GM12878 (cell line): ENCODE measurements at regions of chr12 and their contacts with region 1.

Region 1: GRCh38 chr12:3299929-3300832 is 190.8 kb upstream of the PRMT8 start:
- DNase-seq: peak; percentile 24
- ATAC-seq: peak; percentile 93
- H3K4me3 ChIP-seq: no peak overlapping the region
- H3K27ac ChIP-seq: no peak overlapping the region
- H3K4me1 ChIP-seq: no peaks in the 10 kb centered on the region
- H3K27me3 ChIP-seq: peaks cover 0 to 1% of the 10 kb centered on the region in 2 experiments; a peak in 2 of 4 replicates
- CTCF ChIP-seq: peak; percentile 88 to 97 (median 96)
- EP300 ChIP-seq: no peak
- POLR2A ChIP-seq: no peak
- RAD21 ChIP-seq: peak; percentile 86

Region 2: DNA sequence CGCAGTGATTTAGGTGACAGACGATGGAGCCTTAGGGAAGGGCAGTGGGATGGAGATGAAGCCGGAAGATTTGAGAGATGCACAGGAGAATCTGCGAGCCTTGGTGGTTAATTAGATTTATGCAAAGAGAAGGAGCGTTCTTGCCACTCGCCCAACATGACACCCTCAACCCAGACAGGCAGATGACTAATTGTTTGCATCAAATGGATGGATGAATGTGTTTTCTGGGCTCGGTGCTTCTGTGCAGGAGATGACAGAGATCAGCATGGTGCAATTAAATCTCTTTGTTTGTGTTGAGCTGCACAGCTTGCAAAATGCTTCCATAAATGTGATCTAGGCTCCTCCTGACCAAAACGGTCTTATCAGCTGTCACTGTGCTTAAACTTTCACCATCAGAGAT is 11.5 kb before region 1 on chr12:
- CTCF ChIA-PET with region 1: interaction called, 24 read pairs
- POLR2A ChIA-PET with region 1: no interaction called
- RAD21 ChIA-PET with region 1: interaction called, 3 read pairs
- SMC1A ChIA-PET with region 1: interaction called, 12 read pairs
- in situ Hi-C with region 1: no loop called
- intact Hi-C with region 1: no loop called
- DNase-seq: no peak
- ATAC-seq: no peak
- H3K4me3 ChIP-seq: no peak overlapping the region
- H3K27ac ChIP-seq: no peak overlapping the region
- H3K4me1 ChIP-seq: no peaks in the 10 kb centered on the region
- H3K27me3 ChIP-seq: peaks cover 2 to 17% of the 10 kb centered on the region in 2 experiments; a peak in 3 of 4 replicates
- CTCF ChIP-seq: no peak
- EP300 ChIP-seq: no peak
- POLR2A ChIP-seq: no peak
- RAD21 ChIP-seq: no peak

Region 3: GRCh38 chr12:3777206-3777809 is 477.1 kb after region 1 on chr12:
- CTCF ChIA-PET with region 1: interaction called, 25 read pairs
- POLR2A ChIA-PET with region 1: no interaction called
- RAD21 ChIA-PET with region 1: interaction called, 17 read pairs
- SMC1A ChIA-PET with region 1: interaction called, 17 read pairs
- in situ Hi-C with region 1: loop called (anchors 10 kb)
- intact Hi-C with region 1: loop called (anchors 1 kb)
- DNase-seq: no peak
- ATAC-seq: peak; percentile 69; the same call in 2 of the 3 replicates
- H3K4me3 ChIP-seq: no peak overlapping the region
- H3K27ac ChIP-seq: no peak overlapping the region
- H3K4me1 ChIP-seq: no peaks in the 10 kb centered on the region
- H3K27me3 ChIP-seq: no peaks in the 10 kb centered on the region
- CTCF ChIP-seq: peak; percentile 56 to 72 (median 65); a peak in 5 of 6 replicates
- EP300 ChIP-seq: no peak
- POLR2A ChIP-seq: no peak
- RAD21 ChIP-seq: peak; percentile 79

Region 4: DNA sequence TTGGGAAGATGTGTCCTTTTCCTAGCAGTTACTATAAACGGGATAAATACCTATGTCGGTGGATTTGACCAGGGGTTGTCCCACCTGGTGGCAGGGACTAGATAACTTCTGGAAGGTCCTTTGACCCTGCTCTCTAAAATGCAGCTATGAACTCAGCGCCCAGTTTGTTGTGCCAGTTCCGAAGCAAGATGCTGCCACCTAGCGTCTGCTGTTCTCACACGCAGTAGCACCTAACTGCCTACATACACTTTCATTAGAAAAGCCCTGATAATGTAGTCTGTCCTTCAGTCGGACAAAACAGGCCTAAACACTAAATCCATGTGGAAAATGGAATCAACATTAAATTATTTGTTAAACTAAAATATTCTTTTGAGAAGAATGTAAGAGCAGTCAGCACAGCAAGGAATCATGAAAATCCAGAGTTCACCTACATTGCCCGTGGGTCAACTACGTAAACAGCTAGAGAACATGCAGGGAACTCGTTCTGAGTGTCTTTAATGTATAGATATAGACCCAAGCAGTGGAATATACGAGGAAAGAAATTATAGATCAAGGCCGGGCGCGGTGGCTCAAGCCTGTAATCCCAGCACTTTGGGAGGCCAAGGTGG is 503.8 kb after region 1 on chr12:
- CTCF ChIA-PET with region 1: interaction called, 179 read pairs
- POLR2A ChIA-PET with region 1: no interaction called
- RAD21 ChIA-PET with region 1: interaction called, 47 read pairs
- SMC1A ChIA-PET with region 1: interaction called, 58 read pairs
- in situ Hi-C with region 1: loop called (anchors 5 kb)
- intact Hi-C with region 1: loop called (anchors 1 kb)
- DNase-seq: peak; percentile 23
- ATAC-seq: peak; percentile 98
- H3K4me3 ChIP-seq: no peak overlapping the region
- H3K27ac ChIP-seq: no peak overlapping the region
- H3K4me1 ChIP-seq: no peaks in the 10 kb centered on the region
- H3K27me3 ChIP-seq: no peaks in the 10 kb centered on the region
- CTCF ChIP-seq: peak; percentile 86 to 93 (median 91)
- EP300 ChIP-seq: no peak
- POLR2A ChIP-seq: no peak
- RAD21 ChIP-seq: peak; percentile 87

Region 5: DNA sequence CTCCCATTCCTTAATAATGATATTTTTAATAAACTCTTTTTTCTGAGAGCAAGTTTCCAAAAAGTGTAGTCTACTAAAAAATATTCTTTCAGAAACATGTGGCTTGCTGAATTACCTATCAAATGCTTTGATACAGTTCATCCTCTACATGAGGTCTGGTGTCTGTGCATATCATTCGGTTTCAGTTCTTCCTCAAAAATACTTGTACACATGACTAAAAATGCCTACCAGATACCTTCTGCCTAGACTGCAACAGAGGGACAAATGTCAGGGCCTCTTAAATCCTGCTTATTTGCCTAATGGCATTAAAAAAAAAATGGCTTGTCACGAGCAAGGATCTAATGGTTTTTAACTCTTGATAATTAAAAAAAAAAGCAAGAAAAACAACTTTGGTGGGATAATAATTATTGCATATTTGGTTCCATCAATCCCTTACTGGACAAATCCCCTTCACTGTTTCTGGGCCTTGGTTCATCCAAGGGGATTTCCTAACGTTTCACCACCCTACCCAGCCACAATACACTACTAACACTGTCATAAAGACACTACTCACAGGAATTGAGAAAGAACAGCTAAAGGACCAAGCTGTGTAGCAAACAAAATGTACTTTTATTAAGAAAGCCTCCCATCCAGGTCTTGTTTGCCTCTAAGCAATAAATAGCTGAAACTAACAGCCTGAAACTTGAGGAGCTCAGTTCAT is 527.3 kb after region 1 on chr12:
- CTCF ChIA-PET with region 1: interaction called, 13 read pairs
- POLR2A ChIA-PET with region 1: no interaction called
- RAD21 ChIA-PET with region 1: no interaction called
- SMC1A ChIA-PET with region 1: interaction called, 8 read pairs
- in situ Hi-C with region 1: no loop called
- intact Hi-C with region 1: no loop called
- DNase-seq: peak; percentile 38
- ATAC-seq: peak; percentile 96
- H3K4me3 ChIP-seq: no peak overlapping the region
- H3K27ac ChIP-seq: peak overlapping the region; percentile 75
- H3K4me1 ChIP-seq: peaks cover 13% of the 10 kb centered on the region
- H3K27me3 ChIP-seq: no peaks in the 10 kb centered on the region
- CTCF ChIP-seq: no peak
- EP300 ChIP-seq: peak in 1 of 2 experiments; percentile 48; a peak in 2 of 4 replicates
- POLR2A ChIP-seq: no peak
- RAD21 ChIP-seq: no peak